OCI-LY7 (cell line): ENCODE measurements at regions of chr1 and their contacts with region 1.

Region 1: GRCh38 chr1:239951511-239952140 is 140.1 kb upstream of the FMN2 start:
- DNase-seq: peak; percentile 62
- H3K4me3 ChIP-seq: no peak overlapping the region
- H3K27ac ChIP-seq: no peak overlapping the region
- H3K4me1 ChIP-seq: no peaks in the 10 kb centered on the region
- CTCF ChIP-seq: peak; percentile 81

Region 2: GRCh38 chr1:239763850-239764249 is 187.8 kb before region 1 on chr1:
- CTCF ChIA-PET with region 1: no interaction called
- POLR2A ChIA-PET with region 1: no interaction called
- intact Hi-C with region 1: no loop called
- DNase-seq: no peak
- H3K4me3 ChIP-seq: no peak overlapping the region
- H3K27ac ChIP-seq: no peak overlapping the region
- H3K4me1 ChIP-seq: no peaks in the 10 kb centered on the region
- CTCF ChIP-seq: no peak

Region 3: DNA sequence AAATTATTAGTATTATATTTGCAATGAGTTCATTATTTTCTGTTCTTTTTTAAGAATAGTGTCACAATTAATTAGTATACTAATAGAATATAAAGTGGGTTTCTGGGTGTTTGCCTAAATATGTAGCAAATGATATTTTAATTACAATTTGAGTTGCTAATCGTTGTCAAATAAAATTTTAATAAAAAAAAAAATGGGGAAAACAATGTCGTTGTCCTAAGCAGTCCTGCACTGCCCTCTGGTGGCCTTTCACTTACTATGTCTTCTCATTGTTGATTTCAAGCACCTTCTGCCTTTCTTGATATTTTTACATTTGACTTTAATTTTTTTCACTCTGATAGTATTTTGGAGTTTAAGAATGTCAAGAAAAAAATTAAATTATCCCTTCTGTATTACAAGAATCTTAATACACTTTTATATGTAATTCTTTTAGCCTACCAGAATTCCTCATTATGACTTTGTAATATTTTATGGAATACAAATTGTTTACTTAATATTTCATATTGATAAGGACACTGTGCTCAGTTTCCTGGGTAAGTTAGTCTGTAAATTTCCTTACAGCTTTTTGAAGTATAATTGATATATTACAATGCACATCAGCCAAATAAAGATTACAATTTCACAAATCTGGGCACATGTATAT is 35.6 kb after region 1 on chr1:
- CTCF ChIA-PET with region 1: no interaction called
- POLR2A ChIA-PET with region 1: no interaction called
- intact Hi-C with region 1: loop called (anchors 1 kb)
- DNase-seq: peak; percentile 35
- H3K4me3 ChIP-seq: no peak overlapping the region
- H3K27ac ChIP-seq: no peak overlapping the region
- H3K4me1 ChIP-seq: no peaks in the 10 kb centered on the region
- CTCF ChIP-seq: peak; percentile 86

Region 4: GRCh38 chr1:240189386-240189989 is 237.9 kb after region 1 on chr1:
- CTCF ChIA-PET with region 1: no interaction called
- POLR2A ChIA-PET with region 1: no interaction called
- intact Hi-C with region 1: no loop called
- DNase-seq: peak; percentile 46
- H3K4me3 ChIP-seq: no peak overlapping the region
- H3K27ac ChIP-seq: no peak overlapping the region
- H3K4me1 ChIP-seq: no peaks in the 10 kb centered on the region
- CTCF ChIP-seq: peak; percentile 91